ENCODE measurements at regions of chr1 and their contacts with region 1.

Region 1: DNA sequence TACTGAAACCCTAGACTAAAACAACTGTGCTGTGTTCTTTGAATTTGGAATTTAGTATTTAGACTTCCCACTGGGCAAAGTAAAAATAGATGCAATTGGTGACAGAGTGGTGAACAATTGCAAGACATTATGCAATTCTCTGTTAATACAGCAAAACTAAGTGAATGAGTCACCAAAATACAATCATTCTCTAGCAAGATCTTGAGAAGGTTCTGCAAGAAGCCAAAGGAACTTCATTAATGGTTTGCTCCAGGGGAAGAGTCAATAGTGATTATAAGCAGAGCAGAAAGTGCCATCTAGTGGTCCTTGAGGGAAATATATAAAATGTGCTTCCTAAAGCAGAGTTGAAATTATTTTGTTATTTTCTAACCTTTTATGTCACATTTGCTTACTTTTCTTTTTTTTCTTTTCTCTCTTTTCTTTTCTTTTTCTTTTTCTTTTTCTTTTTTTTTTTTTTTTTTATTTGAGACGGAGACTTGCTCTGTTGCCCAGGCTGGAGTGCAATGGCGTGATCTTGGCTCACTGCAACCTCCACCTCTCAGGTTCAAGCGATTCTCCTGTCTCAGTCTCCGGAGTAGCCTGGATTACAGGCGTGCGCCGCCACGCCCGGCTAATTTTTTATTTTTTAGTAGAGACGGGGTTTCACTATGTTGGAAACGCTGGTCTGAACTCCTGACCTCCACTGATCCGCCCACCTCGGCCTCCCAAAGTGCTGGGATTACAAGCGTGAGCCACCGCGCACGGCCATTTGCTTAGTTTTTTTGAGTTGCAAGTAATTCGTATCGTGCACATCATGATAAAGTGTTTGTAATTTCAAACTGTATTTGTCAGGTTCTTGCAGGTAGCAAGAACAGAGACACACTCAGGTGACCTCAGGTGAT is 99.2 kb downstream of the CTH start:
- DNase-seq: peak in 1 of 3 donors; percentile 8
- ATAC-seq: peak; percentile 82
- H3K4me3 ChIP-seq: no peak overlapping the region
- H3K4me1 ChIP-seq: no peaks in the 10 kb centered on the region
- CTCF ChIP-seq: peak; percentile 28

Region 2: GRCh38 chr1:70134148-70134547 is 376.1 kb before region 1 on chr1:
- intact Hi-C with region 1: loop called in 1 of 2 experiments (anchors 5 kb)
- DNase-seq: no peak
- ATAC-seq: no peak
- H3K4me3 ChIP-seq: no peak overlapping the region
- H3K4me1 ChIP-seq: no peaks in the 10 kb centered on the region
- CTCF ChIP-seq: no peak

Region 3: DNA sequence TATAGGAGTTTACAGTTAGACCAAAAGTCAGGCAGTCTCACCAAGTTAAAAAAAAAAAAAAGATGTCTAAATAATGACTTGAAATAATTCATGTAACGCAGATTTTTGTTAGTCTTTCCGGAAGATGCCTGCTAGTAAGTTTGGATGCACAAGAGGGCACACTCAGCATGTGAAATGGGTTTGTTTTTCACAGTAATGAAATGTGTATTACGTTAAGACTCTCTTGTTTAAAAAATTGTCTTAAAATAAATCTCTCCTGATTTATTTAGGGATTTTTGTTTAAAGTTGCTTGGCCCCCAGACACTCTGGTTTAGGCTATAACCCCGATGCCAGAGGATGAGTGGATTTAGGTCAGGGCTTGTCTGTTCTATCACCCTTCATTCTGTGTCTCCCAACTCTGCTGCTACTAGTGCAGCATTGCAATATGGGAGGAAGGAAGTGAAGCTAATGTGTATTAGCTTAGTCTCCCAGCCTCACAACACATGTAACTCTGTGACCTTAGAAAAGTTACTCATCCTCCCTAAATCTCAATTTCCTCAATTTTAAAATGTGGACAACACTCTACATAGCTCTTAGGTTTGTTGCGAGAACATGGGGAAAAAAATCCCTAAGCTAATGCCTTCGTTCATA is 73.5 kb before region 1 on chr1:
- intact Hi-C with region 1: loop called in 1 of 2 experiments (anchors 2 kb)
- DNase-seq: peak in 1 of 3 donors; percentile 7
- ATAC-seq: no peak
- H3K4me3 ChIP-seq: no peak overlapping the region
- H3K4me1 ChIP-seq: no peaks in the 10 kb centered on the region
- CTCF ChIP-seq: no peak

Region 4: DNA sequence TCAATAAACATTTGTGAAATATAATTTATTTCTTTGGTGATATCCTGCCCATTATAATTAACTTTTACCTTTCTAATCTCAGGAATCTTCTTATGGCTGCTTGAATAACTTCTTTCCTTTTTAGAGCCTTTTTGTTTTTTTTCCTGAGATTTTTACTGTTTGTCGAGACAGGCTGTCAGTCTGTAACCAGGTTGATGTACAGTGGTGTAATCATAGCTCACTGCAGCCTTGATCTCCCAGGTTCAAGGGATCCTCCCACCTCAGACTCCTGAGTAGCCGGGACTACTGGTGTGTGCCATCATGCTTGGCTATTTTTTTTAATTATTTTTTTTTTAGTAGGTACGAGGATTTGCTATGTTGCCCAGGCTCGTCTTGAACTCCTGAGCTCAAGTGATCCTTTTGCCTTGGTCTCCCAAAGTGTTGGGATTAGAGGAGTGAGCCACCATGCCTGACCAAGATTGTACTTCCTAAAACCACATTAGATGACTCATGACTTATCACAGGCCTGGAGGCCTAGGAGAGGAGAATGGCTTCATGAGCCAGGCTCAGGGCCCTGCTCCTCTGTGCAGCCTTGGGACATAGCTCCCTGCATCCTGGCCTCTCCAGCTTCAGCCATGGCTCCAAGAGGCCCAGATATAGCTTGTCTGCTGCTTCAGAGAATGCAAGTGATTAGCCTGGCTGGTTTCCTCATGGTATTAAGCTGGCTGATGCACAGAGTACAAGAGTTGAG is 50.6 kb before region 1 on chr1:
- intact Hi-C with region 1: no loop called
- DNase-seq: no peak
- ATAC-seq: no peak
- H3K4me3 ChIP-seq: no peak overlapping the region
- H3K4me1 ChIP-seq: no peaks in the 10 kb centered on the region
- CTCF ChIP-seq: no peak

Region 5: GRCh38 chr1:70571191-70571590 is 61.0 kb after region 1 on chr1:
- intact Hi-C with region 1: no loop called
- DNase-seq: no peak
- ATAC-seq: no peak
- H3K4me3 ChIP-seq: no peak overlapping the region
- H3K4me1 ChIP-seq: no peaks in the 10 kb centered on the region
- CTCF ChIP-seq: no peak